MCF 10A (cell line): ENCODE measurements at regions of chr1 and their contacts with region 1.

Region 1: DNA sequence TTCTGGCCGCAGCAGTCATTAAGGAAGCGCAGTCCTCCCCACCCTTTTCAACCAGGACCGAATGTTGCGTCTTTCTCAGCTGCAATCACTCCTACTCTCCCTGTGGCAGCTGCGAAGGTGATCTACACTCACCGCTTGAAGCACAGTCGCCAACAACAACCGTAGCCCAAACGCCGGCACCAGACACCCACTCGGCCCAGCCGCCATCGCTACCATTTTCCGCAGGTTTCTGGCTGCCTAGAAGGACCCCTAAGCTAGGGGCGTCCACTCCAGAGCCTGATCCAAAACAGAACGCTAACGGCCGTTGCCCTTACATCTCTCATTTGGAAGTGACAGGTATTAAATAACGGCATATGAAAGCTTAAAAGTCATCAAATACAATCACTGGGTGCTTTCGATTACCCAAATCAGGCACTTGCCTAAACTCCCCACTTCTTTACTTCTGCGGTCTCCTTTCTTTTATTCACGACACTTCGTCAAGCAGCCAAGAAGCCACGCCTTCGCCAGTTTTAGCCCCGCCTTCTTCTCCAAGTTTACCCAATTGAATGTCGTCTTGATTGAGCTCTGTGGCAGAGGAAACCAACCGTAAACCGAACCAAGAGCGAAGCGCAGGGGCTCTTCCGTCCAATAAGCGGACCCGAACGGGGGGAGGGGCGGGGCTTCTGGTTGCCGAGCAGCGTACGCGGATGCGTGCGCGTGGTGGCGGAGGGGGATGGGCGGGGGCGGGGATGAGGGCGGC is at the start of gene SELENOF:
- DNase-seq: peak; percentile 100
- H3K4me3 Mint-ChIP-seq: no peak within 1 kb of the TSS
- H3K27ac Mint-ChIP-seq: no peak within 1 kb of the TSS
- H3K4me1 Mint-ChIP-seq: peaks cover 28% of the 10 kb centered on the region
- H3K27me3 Mint-ChIP-seq: no peaks in the 10 kb centered on the region
- CTCF ChIP-seq: no peak
- total RNA-seq, gene SELENOF: 227 TPM in 2 replicates

Region 2: GRCh38 chr1:86714159-86714558 is 199.9 kb before region 1 on chr1:
- CTCF ChIA-PET with region 1: no interaction called
- POLR2A ChIA-PET with region 1: interaction called, 11 read pairs
- intact Hi-C with region 1: no loop called
- DNase-seq: peak; percentile 13
- H3K4me3 Mint-ChIP-seq: peak overlapping the region; percentile 19
- H3K27ac Mint-ChIP-seq: peak overlapping the region; percentile 17
- H3K4me1 Mint-ChIP-seq: peaks cover 8% of the 10 kb centered on the region
- H3K27me3 Mint-ChIP-seq: no peaks in the 10 kb centered on the region
- CTCF ChIP-seq: no peak

Region 3: DNA sequence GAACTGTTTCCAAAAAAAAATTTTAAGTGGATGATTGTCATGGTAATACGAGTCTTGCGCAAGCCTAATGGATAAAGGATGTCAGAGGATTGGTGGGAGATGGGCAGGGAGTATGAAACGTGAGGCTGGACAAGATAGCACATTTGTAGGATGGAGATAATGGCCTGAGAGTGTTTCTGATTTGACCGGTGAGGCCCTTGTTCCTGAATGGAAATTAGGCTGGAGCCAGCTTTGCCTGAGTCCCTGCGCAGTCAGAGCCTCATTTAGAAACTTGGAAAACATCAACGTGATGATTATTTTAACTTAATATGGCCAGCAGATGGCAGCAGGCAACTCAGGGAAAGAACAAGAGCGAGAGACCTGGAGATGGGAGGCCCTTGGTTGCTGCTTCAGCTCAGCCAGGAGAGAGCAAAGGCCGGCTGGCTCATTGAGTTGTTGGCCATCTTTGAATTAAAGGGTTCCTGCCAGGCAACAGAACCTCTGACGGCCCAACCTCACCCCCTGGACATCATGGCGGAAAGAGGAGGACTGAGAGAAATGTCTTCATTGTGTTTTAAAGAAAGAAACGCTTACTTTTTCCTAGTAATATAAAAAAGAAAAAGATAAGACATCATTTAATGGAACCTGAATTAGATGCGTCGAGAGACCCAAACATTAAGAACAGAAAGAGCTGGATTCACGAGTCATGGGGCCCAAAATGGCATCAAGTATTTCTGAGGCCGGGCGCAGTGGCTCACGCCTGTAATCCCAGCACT is 80.4 kb before region 1 on chr1:
- CTCF ChIA-PET with region 1: interaction called, 8 read pairs
- POLR2A ChIA-PET with region 1: interaction called, 3 read pairs
- intact Hi-C with region 1: loop called (anchors 1 kb)
- DNase-seq: peak; percentile 91
- H3K4me3 Mint-ChIP-seq: no peak overlapping the region
- H3K27ac Mint-ChIP-seq: no peak overlapping the region
- H3K4me1 Mint-ChIP-seq: peaks cover 16% of the 10 kb centered on the region
- H3K27me3 Mint-ChIP-seq: no peaks in the 10 kb centered on the region
- CTCF ChIP-seq: peak; percentile 51

Region 4: GRCh38 chr1:86926883-86927282 is 12.8 kb after region 1 on chr1:
- CTCF ChIA-PET with region 1: no interaction called
- POLR2A ChIA-PET with region 1: interaction called, 33 read pairs
- intact Hi-C with region 1: no loop called
- DNase-seq: no peak
- H3K4me3 Mint-ChIP-seq: no peak overlapping the region
- H3K27ac Mint-ChIP-seq: no peak overlapping the region
- H3K4me1 Mint-ChIP-seq: peaks cover 16% of the 10 kb centered on the region
- H3K27me3 Mint-ChIP-seq: no peaks in the 10 kb centered on the region
- CTCF ChIP-seq: no peak

Region 5: GRCh38 chr1:86972262-86972661 is 58.2 kb after region 1 on chr1:
- CTCF ChIA-PET with region 1: no interaction called
- POLR2A ChIA-PET with region 1: interaction called, 10 read pairs
- intact Hi-C with region 1: no loop called
- DNase-seq: peak; percentile 70
- H3K4me3 Mint-ChIP-seq: peak overlapping the region; percentile 45
- H3K27ac Mint-ChIP-seq: no peak overlapping the region
- H3K4me1 Mint-ChIP-seq: peaks cover 13% of the 10 kb centered on the region
- H3K27me3 Mint-ChIP-seq: no peaks in the 10 kb centered on the region
- CTCF ChIP-seq: no peak

Region 6: DNA sequence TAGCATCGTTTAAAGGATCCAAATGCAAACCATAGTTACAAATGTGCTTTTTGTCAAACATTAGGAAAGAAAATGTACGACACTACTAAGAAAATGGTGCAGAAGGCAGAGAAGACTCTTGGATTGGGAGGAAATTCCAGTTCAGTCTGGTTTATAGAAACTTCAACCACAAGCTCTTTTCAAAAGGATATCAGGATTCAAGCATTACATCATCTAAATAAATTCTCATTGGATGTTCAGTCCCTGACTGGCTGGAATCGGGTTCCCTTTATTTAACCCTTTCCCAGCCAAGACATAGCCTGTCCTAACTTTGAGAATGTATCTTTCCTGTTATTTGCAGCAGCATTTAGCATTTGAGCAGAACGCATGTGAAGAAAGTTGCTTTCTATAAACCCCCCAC is 599.2 kb after region 1 on chr1:
- CTCF ChIA-PET with region 1: no interaction called
- POLR2A ChIA-PET with region 1: no interaction called
- intact Hi-C with region 1: no loop called
- DNase-seq: no peak
- H3K4me3 Mint-ChIP-seq: no peak overlapping the region
- H3K27ac Mint-ChIP-seq: no peak overlapping the region
- H3K4me1 Mint-ChIP-seq: no peaks in the 10 kb centered on the region
- H3K27me3 Mint-ChIP-seq: no peaks in the 10 kb centered on the region
- CTCF ChIP-seq: no peak

Region 7: DNA sequence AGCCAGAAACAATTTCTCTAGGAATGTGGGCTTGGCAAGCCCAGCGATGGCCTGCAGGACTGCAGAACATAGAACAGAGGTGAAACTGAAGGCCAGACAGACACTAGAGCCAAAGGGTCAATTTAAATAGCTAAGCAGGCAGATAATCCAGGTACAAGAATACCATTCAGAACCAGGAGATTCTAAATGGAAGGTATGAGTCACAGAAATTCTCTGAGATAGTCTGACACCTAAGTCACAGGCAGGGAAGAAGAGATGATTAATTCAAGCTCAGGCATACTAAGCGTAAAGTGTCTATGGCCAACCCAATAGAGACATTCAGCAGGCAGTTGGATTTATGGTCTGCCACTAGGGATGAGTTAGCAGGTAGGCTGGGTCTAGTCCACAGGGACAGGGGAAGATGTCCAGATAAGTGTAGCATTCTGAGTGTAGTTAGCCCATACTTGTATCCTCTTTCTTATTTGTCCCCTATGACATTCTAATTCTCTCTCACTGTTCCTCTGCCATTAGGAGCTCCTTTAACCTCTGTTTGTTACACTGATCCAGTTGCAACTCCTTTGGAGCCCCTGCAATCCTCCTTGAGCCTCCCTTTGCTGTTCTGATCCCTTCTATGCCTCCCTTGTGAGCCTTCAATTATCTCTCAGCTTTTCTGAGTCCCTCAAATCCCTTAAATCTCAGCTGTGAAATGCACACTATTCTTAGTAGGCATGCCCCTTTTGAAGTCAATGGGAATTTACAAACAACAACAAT is 798.4 kb after region 1 on chr1:
- CTCF ChIA-PET with region 1: no interaction called
- POLR2A ChIA-PET with region 1: no interaction called
- intact Hi-C with region 1: no loop called
- DNase-seq: peak; percentile 7
- H3K4me3 Mint-ChIP-seq: no peak overlapping the region
- H3K27ac Mint-ChIP-seq: no peak overlapping the region
- H3K4me1 Mint-ChIP-seq: no peaks in the 10 kb centered on the region
- H3K27me3 Mint-ChIP-seq: no peaks in the 10 kb centered on the region
- CTCF ChIP-seq: no peak